ENCODE measurements at regions of chr1 and their contacts with region 1.

Region 1: GRCh38 chr1:37544530-37544929 is 9.6 kb downstream of the SNIP1 start:
- DNase-seq: no peak
- H3K4me3 ChIP-seq: no peak overlapping the region
- H3K27ac ChIP-seq: no peak overlapping the region
- H3K4me1 ChIP-seq: no peaks in the 10 kb centered on the region
- H3K27me3 ChIP-seq: no peaks in the 10 kb centered on the region
- CTCF ChIP-seq: no peak

Region 2: GRCh38 chr1:36248250-36248894 is 1296.2 kb before region 1 on chr1:
- CTCF ChIA-PET with region 1: no interaction called
- POLR2A ChIA-PET with region 1: interaction called, 27 read pairs
- intact Hi-C with region 1: no loop called
- DNase-seq: peak; percentile 79 to 88
- H3K4me3 ChIP-seq: no peak overlapping the region
- H3K27ac ChIP-seq: peak overlapping the region; percentile 90
- H3K4me1 ChIP-seq: peaks cover 66% of the 10 kb centered on the region
- H3K27me3 ChIP-seq: no peaks in the 10 kb centered on the region
- CTCF ChIP-seq: no peak

Region 3: GRCh38 chr1:37561133-37562132 is 16.9 kb after region 1 on chr1:
- CTCF ChIA-PET with region 1: no interaction called
- POLR2A ChIA-PET with region 1: no interaction called
- intact Hi-C with region 1: no loop called
- DNase-seq: peak in 1 of 2 experiments; percentile 27
- H3K4me3 ChIP-seq: no peak overlapping the region
- H3K27ac ChIP-seq: no peak overlapping the region
- H3K4me1 ChIP-seq: 0 out of 2 replicates have a peak, but pooled peaks cover 2% of the 10 kb centered on the region
- H3K27me3 ChIP-seq: no peaks in the 10 kb centered on the region
- CTCF ChIP-seq: peak; percentile 69

Region 4: DNA sequence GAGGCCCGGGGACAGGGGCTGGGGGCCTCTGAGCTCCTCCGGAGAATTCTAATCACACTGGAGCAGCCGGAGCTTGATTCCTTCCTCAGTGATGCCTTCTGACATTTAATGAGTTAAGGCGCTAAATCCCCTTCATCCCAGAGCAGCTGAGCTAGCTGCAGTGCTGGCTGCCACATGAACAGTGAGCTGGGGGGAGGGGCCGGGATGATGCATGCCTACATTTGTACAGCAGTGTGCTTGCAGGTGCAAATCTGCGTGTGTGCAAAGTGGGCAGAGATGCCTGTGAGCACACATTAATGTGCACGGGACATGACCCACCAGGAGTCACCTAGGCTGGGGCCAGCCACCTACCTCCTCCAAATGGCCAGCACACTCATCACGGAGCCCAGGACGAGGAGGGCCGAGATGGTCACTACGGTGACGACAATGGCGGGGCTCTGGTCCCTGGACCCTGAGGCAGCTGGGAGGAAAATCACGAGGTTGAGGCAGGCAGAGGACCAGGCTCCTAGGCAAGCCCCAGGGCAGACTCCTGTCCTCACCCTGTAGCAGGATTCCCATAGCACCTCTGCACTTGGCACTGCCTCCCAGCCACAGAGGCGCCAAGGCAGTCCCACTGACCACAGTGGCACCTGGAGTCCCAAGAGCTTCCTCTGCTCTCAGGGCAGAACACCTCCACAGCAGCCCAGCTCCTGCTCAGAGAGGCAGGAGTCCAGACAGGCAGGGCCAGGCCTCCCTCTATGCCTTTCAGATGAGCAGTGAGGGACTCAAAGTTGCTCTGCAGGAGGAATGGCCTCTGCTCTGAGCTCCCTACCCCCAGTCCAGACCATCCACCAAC is 182.4 kb after region 1 on chr1:
- CTCF ChIA-PET with region 1: no interaction called
- POLR2A ChIA-PET with region 1: no interaction called
- intact Hi-C with region 1: no loop called
- DNase-seq: no peak
- H3K4me3 ChIP-seq: no peak overlapping the region
- H3K27ac ChIP-seq: no peak overlapping the region
- H3K4me1 ChIP-seq: no peaks in the 10 kb centered on the region
- H3K27me3 ChIP-seq: no peaks in the 10 kb centered on the region
- CTCF ChIP-seq: no peak

Measured in PC-9 (cell line).